ENCODE measurements at regions of chr2 and their contacts with region 1.

Region 1: GRCh38 chr2:178796079-178796677 is 11.0 kb downstream of the TTN start:
- DNase-seq: peak; percentile 47
- ATAC-seq: no peak
- H3K4me3 ChIP-seq: no peak overlapping the region
- H3K4me3 Mint-ChIP-seq: no peak overlapping the region
- H3K27ac ChIP-seq: no peak overlapping the region
- H3K27ac Mint-ChIP-seq: no peak overlapping the region
- H3K4me1 ChIP-seq: no peaks in the 10 kb centered on the region
- H3K4me1 Mint-ChIP-seq: no peaks in the 10 kb centered on the region
- H3K27me3 ChIP-seq: no peaks in the 10 kb centered on the region
- H3K27me3 Mint-ChIP-seq: no peaks in the 10 kb centered on the region
- CTCF ChIP-seq: peak; percentile 80

Region 2: DNA sequence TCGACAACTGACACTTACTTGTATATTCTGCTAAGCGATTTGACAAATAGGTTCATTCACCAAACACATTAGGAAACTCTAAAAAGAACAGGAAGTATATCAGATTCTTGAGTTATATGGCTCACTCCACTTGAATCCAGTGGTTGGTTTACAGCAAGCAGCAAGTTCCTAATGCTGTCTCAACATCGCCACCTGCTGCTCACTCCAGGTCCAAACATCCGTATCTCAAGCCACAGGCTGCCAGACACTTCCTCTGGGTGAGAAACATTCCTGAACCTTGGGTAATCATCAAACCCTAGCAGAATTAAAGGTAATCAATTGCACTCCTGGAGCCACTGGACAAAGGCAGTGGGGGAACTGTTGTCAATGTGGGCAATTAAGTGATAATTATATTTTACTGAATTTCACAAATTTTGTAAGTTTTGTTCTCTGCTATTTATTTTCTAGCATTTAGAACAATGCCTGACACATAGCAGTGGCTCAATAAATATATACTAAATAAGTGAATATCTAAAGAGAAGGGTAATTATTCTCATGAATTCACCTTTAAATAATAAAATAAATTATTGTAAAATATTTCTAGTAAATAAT is 118.2 kb after region 1 on chr2:
- CTCF ChIA-PET with region 1: interaction called, 4 read pairs
- POLR2A ChIA-PET with region 1: no interaction called
- intact Hi-C with region 1: loop called (anchors 1 kb)
- DNase-seq: peak; percentile 70
- ATAC-seq: peak; percentile 79
- H3K4me3 ChIP-seq: no peak overlapping the region
- H3K4me3 Mint-ChIP-seq: no peak overlapping the region
- H3K27ac ChIP-seq: no peak overlapping the region
- H3K27ac Mint-ChIP-seq: no peak overlapping the region
- H3K4me1 ChIP-seq: no peaks in the 10 kb centered on the region
- H3K4me1 Mint-ChIP-seq: peaks cover 9% of the 10 kb centered on the region
- H3K27me3 ChIP-seq: no peaks in the 10 kb centered on the region
- H3K27me3 Mint-ChIP-seq: no peaks in the 10 kb centered on the region
- CTCF ChIP-seq: peak; percentile 90

Region 3: GRCh38 chr2:179440642-179441251 is 644.6 kb after region 1 on chr2:
- CTCF ChIA-PET with region 1: interaction called, 3 read pairs
- POLR2A ChIA-PET with region 1: no interaction called
- intact Hi-C with region 1: loop called (anchors 1 kb)
- DNase-seq: peak; percentile 70
- ATAC-seq: no peak
- H3K4me3 ChIP-seq: no peak overlapping the region
- H3K4me3 Mint-ChIP-seq: no peak overlapping the region
- H3K27ac ChIP-seq: no peak overlapping the region
- H3K27ac Mint-ChIP-seq: no peak overlapping the region
- H3K4me1 ChIP-seq: no peaks in the 10 kb centered on the region
- H3K4me1 Mint-ChIP-seq: no peaks in the 10 kb centered on the region
- H3K27me3 ChIP-seq: peaks cover 0 to 8% (median 1%) of the 10 kb centered on the region in 4 experiments
- H3K27me3 Mint-ChIP-seq: peaks cover 30% of the 10 kb centered on the region
- CTCF ChIP-seq: peak; percentile 89

Region 4: DNA sequence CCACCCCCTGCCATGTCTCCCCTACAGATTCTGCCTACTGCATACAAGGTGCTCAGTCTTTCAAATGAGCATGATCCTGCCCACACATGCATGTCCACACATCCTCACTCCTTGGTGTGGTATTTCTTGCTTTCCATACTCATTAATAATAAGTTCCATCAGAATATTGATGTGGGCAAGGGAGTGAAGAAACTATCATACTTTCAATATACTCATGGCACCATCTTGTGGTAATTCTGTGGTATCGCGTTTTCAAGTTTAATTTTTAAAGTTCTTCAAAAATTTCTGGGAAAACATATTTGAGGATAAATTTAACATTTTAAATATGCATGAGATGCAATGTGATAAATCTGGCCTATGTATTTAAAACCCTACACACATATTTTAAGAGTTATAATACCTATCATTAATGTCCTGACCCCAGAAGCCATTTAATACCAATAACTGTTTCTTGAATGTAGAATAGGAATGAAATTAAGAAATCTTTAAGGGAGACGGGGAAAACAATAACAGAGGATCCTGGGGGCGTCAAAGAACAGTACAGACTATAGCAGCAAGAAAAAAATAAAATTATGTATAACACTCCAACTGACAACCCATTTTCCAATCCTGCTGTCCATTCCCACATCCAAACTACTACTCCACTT is 955.1 kb after region 1 on chr2:
- CTCF ChIA-PET with region 1: no interaction called
- POLR2A ChIA-PET with region 1: no interaction called
- intact Hi-C with region 1: loop called (anchors 1 kb)
- DNase-seq: peak; percentile 31
- ATAC-seq: no peak
- H3K4me3 ChIP-seq: no peak overlapping the region
- H3K4me3 Mint-ChIP-seq: no peak overlapping the region
- H3K27ac ChIP-seq: no peak overlapping the region
- H3K27ac Mint-ChIP-seq: no peak overlapping the region
- H3K4me1 ChIP-seq: no peaks in the 10 kb centered on the region
- H3K4me1 Mint-ChIP-seq: no peaks in the 10 kb centered on the region
- H3K27me3 ChIP-seq: peaks cover 0 to 2% (median 0%) of the 10 kb centered on the region in 4 experiments
- H3K27me3 Mint-ChIP-seq: peaks cover 6% of the 10 kb centered on the region
- CTCF ChIP-seq: peak; percentile 76